Right ventricle myocardium superior (tissue), 1 donor: ENCODE measurements at regions of chr2 and their contacts with region 1.

Region 1: GRCh38 chr2:120576509-120577474 is 158.9 kb upstream of the GLI2 start:
- DNase-seq: peak; percentile 74
- ATAC-seq: peak; percentile 73

Region 2: DNA sequence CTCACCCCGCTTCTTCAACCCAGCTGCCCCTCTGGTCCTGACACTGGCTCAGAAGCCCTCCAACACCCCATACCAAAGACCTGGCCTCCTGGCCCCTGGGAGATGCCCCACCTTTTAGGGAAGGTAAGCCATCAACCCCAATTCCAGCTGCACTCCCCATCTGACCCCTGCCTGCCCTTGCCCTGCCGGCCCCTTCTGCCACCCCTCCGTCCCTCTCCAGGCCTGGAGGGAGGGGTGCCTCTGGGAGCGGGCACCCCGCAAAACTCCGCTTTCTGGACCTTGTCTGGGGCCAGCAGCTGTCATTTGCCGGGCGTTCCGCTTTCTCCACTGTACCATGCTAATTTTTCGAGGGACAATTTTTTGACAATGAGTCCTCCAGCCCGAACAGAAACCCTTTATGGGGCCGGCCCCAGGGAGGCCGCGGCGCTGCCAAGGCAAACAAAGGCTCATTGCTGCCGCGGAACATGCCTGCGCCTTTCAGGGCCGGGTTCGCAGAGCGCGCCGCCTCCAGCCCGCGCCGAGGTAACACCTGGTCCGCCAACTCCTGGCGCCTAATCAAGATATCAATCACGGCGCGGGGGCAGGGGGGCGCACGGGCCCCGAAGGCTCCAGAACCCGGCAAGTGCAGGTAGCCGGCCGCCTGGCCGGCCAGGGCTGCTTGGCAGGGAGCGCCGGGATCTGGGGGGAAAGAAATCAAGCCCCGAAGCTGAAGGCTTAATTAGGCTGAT is 134.9 kb before region 1 on chr2:
- intact Hi-C with region 1: loop called (anchors 10 kb)
- DNase-seq: peak; percentile 59
- ATAC-seq: peak; percentile 78

Region 3: GRCh38 chr2:121018136-121019061 is 441.6 kb after region 1 on chr2:
- intact Hi-C with region 1: no loop called
- DNase-seq: peak; percentile 53
- ATAC-seq: peak; percentile 71